ENCODE measurements at regions of chr12 and their contacts with region 1.

Region 1: DNA sequence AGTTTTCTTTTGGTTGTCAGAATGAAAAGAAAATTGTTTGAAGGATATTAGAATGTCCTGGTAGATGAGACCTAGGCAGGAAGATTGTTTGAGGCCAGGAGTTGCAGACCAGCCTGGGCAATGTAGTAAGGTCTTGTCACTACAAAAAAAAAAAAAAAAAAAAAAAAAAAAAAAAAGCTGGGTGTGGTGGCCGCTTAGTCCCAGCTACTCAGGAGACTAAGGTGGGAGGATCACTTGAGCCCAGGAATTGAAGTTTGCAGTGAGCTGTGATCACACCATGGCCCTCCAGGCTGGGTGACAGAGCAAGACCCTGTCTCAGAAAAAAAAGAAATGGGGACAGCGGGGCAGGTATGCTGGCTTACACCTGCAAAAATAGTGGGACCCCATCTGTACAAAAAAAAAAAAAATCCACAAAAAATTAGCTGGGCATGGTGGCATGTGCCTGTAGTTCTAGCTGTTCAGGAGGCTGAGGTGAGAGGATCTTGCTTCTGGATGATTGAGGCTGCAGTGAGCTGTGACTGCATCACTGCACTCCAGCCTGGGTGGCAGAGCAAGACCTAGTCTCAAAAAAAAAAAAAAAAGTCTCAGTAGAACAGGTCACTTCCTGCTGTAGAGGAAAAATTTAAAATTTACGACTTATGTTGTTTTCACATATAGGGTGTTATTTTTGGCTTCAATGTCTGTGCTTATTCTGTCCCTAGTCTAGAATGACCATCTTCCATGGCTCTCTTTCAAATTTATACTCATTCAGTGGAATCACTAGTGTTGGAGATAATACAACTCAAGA is 70.7 kb downstream of the PPHLN1 start:
- DNase-seq: no peak
- H3K4me3 ChIP-seq: no peak overlapping the region
- H3K27me3 ChIP-seq: no peaks in the 10 kb centered on the region
- CTCF ChIP-seq: no peak

Region 2: GRCh38 chr12:42315108-42315507 is 81.6 kb before region 1 on chr12:
- CTCF ChIA-PET with region 1: no interaction called
- POLR2A ChIA-PET with region 1: no interaction called
- DNase-seq: no peak
- H3K4me3 ChIP-seq: no peak overlapping the region
- H3K27me3 ChIP-seq: no peaks in the 10 kb centered on the region
- CTCF ChIP-seq: no peak

Region 3: GRCh38 chr12:42343721-42344120 is 52.9 kb before region 1 on chr12:
- CTCF ChIA-PET with region 1: no interaction called
- POLR2A ChIA-PET with region 1: interaction called, 21 read pairs
- DNase-seq: no peak
- H3K4me3 ChIP-seq: no peak overlapping the region
- H3K27me3 ChIP-seq: no peaks in the 10 kb centered on the region
- CTCF ChIP-seq: no peak

Measured in BJ (cell line).